Ascending aorta (tissue), 2 donors: ENCODE measurements at regions of chr13 and their contacts with region 1.

Region 1: GRCh38 chr13:51452361-51453206 is at the start of gene INTS6:
- DNase-seq: peak; percentile 98 to 100
- H3K4me3 ChIP-seq: peak within 1 kb of the TSS; percentile 94 to 98
- H3K27ac ChIP-seq: peak within 1 kb of the TSS; percentile 97 to 100
- H3K4me1 ChIP-seq: peaks cover 0 to 18% of the 10 kb centered on the region in 2 donors
- H3K27me3 ChIP-seq: no peaks in the 10 kb centered on the region
- CTCF ChIP-seq: no peak
- total RNA-seq, gene INTS6: 43.5 TPM

Region 2: DNA sequence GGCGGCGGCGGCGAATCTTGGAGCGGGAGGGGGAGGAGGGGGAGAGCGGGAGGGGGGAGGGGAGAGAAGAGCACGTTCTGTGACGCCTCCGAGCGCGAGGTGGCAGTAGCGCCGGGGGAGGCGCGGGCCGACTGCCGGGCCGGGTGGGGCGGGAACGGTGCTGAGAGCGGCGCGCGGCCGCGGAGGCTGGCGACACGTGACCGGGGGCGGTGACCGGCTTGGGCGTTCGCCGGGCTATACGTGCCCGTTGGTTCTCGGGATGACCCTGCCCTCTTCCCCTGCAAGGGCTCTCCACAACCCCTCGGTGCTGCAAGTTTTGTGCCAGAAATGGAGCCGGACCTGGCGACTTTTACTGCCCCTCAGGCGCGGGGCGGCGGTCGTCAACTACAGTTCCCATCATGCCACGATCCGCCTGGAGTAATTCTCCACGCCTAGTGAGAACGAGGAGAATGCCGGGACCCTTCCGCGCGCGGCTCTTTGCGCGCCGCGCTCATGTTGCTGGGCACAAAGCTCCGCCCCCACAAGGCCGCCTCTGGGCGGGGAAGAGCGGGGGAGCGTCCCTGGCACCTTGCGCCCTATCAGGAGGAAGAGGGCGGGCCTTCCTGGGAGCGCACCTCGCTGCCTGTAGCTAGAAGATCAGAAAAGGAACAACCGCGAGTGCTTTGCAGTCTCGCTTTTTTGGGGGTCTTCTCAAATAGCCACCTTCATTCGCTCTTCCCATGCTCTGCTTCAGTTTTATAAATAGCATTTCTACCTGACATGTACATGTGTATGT is 1659.8 kb before region 1 on chr13 and contains the start of gene KPNA3:
- intact Hi-C with region 1: loop called (anchors 5 kb)
- DNase-seq: peak; percentile 87 to 97
- H3K4me3 ChIP-seq: peak within 1 kb of the TSS; percentile 81 to 100
- H3K27ac ChIP-seq: peak within 1 kb of the TSS; percentile 90 to 99
- H3K4me1 ChIP-seq: peaks cover 0 to 12% of the 10 kb centered on the region in 2 donors
- H3K27me3 ChIP-seq: no peaks in the 10 kb centered on the region
- CTCF ChIP-seq: peak in 2 of 3 experiments; percentile 11 to 16
- total RNA-seq, gene KPNA3: 5.9 TPM

Region 3: DNA sequence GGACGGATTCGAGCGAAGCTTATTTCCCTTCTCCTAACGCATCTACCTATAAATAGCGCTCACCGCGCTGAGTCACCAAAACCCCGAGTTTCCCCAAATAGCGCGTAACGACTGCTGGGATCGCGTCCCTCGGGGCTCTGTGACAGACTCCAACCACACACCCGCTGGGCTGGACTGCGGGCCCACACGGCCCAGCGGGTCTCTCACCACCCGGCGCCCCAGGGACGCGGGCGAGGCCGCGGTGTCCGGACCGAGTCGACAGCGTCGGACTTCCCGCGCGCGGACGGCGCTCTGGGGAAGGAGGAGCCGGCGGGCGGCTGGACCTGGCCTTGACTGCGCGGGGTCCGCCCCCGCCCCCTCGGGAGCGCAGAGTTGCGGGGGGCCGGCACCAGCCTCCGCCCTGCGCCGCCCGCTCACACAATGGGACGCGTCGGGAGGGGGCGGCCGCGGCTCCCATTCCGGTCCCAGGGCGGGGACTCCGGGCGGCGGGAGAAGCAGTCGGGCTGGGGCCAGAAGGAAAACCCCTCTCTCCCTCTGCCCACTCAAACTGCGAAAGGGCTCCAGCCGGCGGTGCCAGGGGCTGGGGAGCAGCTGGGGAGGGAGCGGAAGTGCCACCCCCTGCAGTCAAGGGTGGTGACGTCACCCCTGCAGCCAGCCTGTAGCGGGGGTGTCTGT is 1328.6 kb before region 1 on chr13:
- intact Hi-C with region 1: loop called (anchors 10 kb)
- DNase-seq: peak; percentile 92 to 98
- H3K4me3 ChIP-seq: peak overlapping the region; percentile 76 to 90
- H3K27ac ChIP-seq: peak overlapping the region; percentile 100
- H3K4me1 ChIP-seq: peaks cover 0 to 20% of the 10 kb centered on the region in 2 donors
- H3K27me3 ChIP-seq: no peaks in the 10 kb centered on the region
- CTCF ChIP-seq: no peak

Region 4: GRCh38 chr13:51397262-51397941 is 55.2 kb before region 1 on chr13:
- intact Hi-C with region 1: loop called (anchors 2 kb)
- DNase-seq: peak in 1 of 2 donors; percentile 64
- H3K4me3 ChIP-seq: no peak overlapping the region
- H3K27ac ChIP-seq: peak overlapping the region; percentile 32 to 52
- H3K4me1 ChIP-seq: peaks cover 0 to 15% of the 10 kb centered on the region in 2 donors
- H3K27me3 ChIP-seq: no peaks in the 10 kb centered on the region
- CTCF ChIP-seq: no peak

Region 5: DNA sequence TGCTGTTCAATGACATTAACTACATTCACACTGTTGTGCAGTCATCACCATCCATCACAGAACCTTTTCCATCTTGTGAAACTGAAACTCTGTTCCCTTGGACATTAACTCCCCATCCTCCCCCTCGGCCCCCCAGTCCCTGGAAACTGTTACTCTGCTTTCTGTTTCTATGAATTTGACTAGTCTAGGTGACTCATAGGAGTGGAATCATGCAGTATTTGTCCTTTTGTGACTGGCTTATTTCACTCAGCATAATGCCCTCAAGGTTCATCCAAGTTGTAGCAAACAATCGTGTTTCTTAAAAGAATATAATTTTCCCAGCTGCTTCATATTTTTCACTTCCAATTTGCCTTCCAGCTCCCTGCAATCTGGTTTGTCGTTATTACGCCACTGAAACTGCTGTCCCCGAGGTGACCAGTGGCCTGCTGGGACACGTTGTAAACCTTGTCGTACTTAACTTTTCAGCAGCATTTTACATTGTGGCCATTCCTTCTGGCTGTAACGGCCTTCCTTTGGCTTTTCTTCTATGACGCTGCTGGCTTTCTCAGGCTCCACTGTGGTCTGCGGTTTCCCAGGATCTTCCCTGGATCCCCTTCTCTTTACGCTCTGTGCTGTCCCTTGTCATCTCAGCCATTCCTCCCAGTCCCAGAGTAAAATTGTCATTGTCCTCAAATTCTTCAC is 277.4 kb after region 1 on chr13:
- intact Hi-C with region 1: loop called (anchors 1 kb)
- DNase-seq: peak; percentile 29 to 90
- H3K4me3 ChIP-seq: peak overlapping the region in 1 of 2 donors; percentile 51
- H3K27ac ChIP-seq: peak overlapping the region; percentile 84 to 93
- H3K4me1 ChIP-seq: peaks cover 15 to 47% of the 10 kb centered on the region in 2 donors
- H3K27me3 ChIP-seq: no peaks in the 10 kb centered on the region
- CTCF ChIP-seq: no peak

Region 6: DNA sequence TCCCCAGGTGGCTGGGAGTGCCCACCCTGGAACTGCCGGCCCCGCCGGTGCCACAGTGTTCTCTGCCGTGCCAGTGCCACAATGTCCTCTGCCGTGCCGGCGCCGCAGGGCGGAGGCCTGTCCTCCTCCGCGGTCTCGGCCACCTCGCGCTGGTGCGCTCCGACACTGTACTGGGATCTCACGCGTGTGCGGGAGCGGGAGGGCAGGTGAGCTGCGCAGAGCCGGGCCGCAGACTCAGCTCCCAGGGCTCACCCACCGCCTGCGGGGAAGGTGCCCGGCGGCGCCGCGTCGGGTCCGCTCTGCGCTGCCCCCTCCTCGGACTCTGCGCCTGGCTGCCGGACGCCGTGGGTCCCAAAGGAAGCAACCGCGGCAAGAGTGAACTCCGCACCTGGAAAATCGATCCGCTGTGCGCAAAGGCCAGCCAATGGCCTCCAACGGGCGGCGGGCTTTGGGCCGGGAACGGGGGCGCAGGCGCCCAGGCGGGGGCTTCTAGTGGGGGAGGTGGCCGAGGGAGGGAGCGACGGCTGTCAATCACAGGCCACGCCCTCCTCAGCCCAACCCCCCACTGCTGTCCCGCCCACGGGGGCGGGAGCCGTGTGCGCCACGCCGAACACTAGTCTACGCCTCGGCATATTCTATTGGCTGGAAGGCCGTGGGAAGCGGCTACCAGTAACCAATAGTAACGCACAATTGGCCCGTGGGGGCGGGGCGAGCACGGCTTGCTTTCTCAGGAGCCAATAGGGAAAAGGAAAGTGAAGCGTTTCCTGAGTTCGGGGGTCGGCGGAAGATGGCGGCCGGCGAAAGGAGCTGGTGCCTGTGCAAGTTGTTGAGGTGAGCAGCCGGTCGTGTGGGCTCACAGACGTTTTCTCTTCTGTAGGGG is 559.3 kb after region 1 on chr13 and contains the start of gene ALG11:
- intact Hi-C with region 1: loop called (anchors 5 kb)
- DNase-seq: peak; percentile 97 to 100
- H3K4me3 ChIP-seq: peak within 1 kb of the TSS; percentile 73 to 75
- H3K27ac ChIP-seq: peak within 1 kb of the TSS; percentile 65 to 70
- H3K4me1 ChIP-seq: peaks cover 0 to 9% of the 10 kb centered on the region in 2 donors
- H3K27me3 ChIP-seq: no peaks in the 10 kb centered on the region
- CTCF ChIP-seq: no peak
- total RNA-seq, gene ALG11: 13.6 TPM